HEK293 (cell line): ENCODE measurements at regions of chr7 and their contacts with region 1.

Region 1: GRCh38 chr7:77759294-77759889 is 38.8 kb downstream of the TMEM60 start:
- H3K4me3 ChIP-seq: no peak overlapping the region
- H3K27ac ChIP-seq: no peak overlapping the region
- H3K4me1 ChIP-seq: peaks cover 5% of the 10 kb centered on the region; the same call in 1 of the 2 replicates
- CTCF ChIP-seq: peak; percentile 11; the same call in 1 of the 2 replicates

Region 2: DNA sequence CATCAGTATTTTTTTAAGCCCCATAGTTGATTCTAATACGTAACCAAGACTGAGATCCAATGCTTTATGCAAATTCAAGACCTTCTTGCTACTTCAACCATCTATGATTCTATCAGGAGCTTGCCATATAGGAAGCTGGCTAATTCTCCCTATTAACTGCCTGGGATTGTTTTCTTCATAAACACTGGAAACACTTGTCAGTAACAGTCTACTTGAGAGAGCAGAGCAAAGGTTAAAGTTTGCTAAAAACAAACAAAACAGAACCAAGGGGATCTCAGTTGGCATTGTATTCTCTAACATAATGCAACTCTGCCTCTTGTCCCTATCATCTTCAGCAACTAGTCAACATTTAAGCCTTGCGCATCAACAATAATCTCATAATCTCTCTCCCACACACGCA is 243.3 kb before region 1 on chr7:
- CTCF ChIA-PET with region 1: no interaction called
- POLR2A ChIA-PET with region 1: no interaction called
- H3K4me3 ChIP-seq: no peak overlapping the region
- H3K27ac ChIP-seq: no peak overlapping the region
- H3K4me1 ChIP-seq: no peaks in the 10 kb centered on the region
- CTCF ChIP-seq: no peak

Region 3: DNA sequence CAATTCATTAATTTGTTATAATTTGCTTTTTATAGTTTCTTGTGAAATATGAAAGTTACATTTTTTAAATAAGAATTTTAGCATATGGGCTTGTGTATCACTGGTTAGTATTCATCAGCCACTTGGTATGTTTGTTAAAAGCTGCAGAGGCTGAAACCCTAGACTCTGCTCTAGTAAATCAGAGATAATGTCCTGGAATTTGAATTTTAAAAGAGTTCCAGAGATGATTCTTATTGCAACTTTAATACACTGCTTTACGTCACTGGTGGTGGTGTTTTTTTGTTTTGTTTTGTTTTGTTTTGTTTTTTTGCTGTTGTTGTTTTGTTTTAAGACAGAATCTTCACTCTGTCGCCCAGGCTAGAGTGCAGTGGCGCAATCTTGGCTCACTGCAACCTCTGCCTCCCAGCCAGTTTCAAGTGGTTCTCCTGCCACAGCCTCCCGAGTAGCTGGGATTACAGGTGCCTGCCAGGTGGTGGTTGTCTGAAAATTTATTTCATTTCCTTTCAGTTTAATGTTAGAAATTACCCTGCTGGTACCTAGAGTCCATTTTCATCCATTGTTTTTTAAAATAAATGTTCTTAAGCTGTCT is 178.5 kb before region 1 on chr7:
- CTCF ChIA-PET with region 1: no interaction called
- POLR2A ChIA-PET with region 1: no interaction called
- H3K4me3 ChIP-seq: no peak overlapping the region
- H3K27ac ChIP-seq: no peak overlapping the region
- H3K4me1 ChIP-seq: peaks cover 7% of the 10 kb centered on the region; the same call in 1 of the 2 replicates
- CTCF ChIP-seq: no peak

Region 4: GRCh38 chr7:77657427-77658224 is 101.8 kb before region 1 on chr7:
- CTCF ChIA-PET with region 1: interaction called, 49 read pairs
- POLR2A ChIA-PET with region 1: no interaction called
- H3K4me3 ChIP-seq: no peak overlapping the region
- H3K27ac ChIP-seq: no peak overlapping the region
- H3K4me1 ChIP-seq: no peaks in the 10 kb centered on the region
- CTCF ChIP-seq: no peak

Region 5: DNA sequence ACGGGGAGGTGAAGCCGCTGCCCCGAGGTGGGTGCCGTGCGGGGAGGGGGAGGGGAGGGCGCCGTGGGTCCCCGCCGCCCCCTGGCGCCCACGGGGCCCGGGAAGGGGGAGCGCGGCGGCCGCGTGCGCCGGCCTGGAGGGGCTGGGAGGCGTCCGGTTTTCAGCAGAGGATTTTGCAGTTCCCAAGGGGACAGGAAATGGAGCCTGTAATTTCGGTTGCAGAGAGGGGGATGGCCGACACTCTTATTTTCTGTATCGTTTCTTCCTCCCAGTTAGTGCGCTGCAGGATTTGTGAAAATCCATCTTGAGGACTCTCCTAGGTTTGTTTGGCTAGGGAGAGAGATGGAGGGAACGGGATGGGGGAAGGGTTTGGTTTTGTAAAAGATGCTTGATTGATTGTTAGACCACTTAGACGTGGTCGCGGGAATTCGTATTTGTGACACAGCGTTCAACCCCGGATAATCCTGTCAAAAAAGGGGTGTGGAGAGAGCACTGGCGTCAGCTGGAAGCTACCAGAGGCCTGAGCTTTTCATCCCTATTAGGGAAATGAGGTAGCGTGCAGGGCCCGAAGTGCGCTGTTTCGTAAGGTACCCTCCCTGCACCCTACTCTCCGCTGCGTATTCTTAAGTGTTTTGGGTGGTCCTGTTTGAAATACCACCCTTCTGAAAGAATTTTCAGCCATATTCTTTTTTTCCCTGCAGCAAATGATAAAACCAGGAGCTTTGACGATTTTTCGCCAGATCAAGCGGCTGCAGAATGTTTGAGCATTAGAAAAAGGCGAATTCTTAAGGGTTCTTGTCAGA is 62.2 kb before region 1 on chr7:
- CTCF ChIA-PET with region 1: interaction called, 10 read pairs
- POLR2A ChIA-PET with region 1: interaction called, 4 read pairs
- H3K4me3 ChIP-seq: peak overlapping the region; percentile 75
- H3K27ac ChIP-seq: peak overlapping the region; percentile 83
- H3K4me1 ChIP-seq: peaks cover 7% of the 10 kb centered on the region
- CTCF ChIP-seq: 0 out of 2 replicates have a peak, but pooled peaks have one; percentile 7